HepG2 (cell line): ENCODE measurements at regions of chr2 and their contacts with region 1.

Region 1: DNA sequence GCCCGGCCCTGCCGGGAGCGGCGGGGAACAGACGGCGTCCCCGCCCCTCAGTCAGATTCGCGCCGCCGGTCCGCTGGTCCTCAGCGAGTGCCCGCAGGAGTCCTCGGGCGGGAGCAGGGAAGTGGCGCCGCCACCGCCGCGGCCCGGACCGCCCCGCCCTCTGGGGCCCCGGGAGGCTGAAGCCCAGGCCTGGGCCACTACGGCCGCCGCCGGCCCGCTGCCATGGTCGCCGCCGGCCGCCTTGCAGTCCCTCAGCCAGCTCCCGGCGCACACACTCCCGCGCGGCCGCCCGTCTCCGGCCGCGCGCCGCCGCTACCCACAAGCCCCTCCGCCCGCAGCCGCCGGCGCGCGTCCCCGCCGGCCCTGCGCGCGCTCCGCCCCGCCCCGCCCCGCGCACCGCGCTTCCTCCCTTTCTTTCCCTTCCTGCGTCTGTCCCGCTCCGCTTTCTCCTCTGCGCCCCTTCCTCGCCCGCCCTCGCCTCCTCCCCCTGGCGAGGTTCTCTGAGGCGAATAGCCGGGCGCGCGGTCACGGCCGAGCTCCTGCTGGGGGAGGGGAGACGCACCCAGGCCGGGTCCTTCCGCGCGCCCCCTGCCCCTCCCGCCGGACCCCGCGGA is at the start of gene ROCK2:
- DNase-seq: peak; percentile 88
- ATAC-seq: peak; percentile 52
- H3K4me3 ChIP-seq: peak within 1 kb of the TSS; percentile 72 to 96 (median 86)
- H3K27ac ChIP-seq: peak within 1 kb of the TSS; percentile 98
- H3K4me1 ChIP-seq: peaks cover 52% of the 10 kb centered on the region
- H3K27me3 ChIP-seq: no peaks in the 10 kb centered on the region; a peak in 1 of 5 replicates
- CTCF ChIP-seq: peak; percentile 19; the same call in 1 of the 2 replicates
- EP300 ChIP-seq: peak in 1 of 2 experiments; percentile 52; a peak in 2 of 4 replicates
- POLR2A ChIP-seq: peak; percentile 17 to 80; a peak in 3 of 4 replicates
- RAD21 ChIP-seq: no peak
- total RNA-seq, gene ROCK2: 119 and 174 TPM in 2 replicates

Region 2: GRCh38 chr2:11129598-11130449 is 214.6 kb before region 1 on chr2:
- CTCF ChIA-PET with region 1: no interaction called
- POLR2A ChIA-PET with region 1: interaction called, 19 read pairs
- in situ Hi-C with region 1: no loop called
- intact Hi-C with region 1: loop called (anchors 10 kb)
- DNase-seq: peak; percentile 62
- ATAC-seq: peak; percentile 68
- H3K4me3 ChIP-seq: peak overlapping the region; percentile 46 to 64 (median 47)
- H3K27ac ChIP-seq: no peak overlapping the region
- H3K4me1 ChIP-seq: peaks cover 58% of the 10 kb centered on the region
- H3K27me3 ChIP-seq: peaks cover 3 to 32% of the 10 kb centered on the region in 2 experiments; a peak in 4 of 5 replicates
- CTCF ChIP-seq: peak; percentile 93
- EP300 ChIP-seq: no peak
- POLR2A ChIP-seq: no peak
- RAD21 ChIP-seq: peak; percentile 76

Region 3: GRCh38 chr2:11305958-11306357 is 38.5 kb before region 1 on chr2:
- CTCF ChIA-PET with region 1: no interaction called
- POLR2A ChIA-PET with region 1: interaction called, 10 read pairs
- in situ Hi-C with region 1: no loop called
- intact Hi-C with region 1: no loop called
- DNase-seq: no peak
- ATAC-seq: peak; percentile 43
- H3K4me3 ChIP-seq: no peak overlapping the region
- H3K27ac ChIP-seq: no peak overlapping the region
- H3K4me1 ChIP-seq: peaks cover 70% of the 10 kb centered on the region
- H3K27me3 ChIP-seq: no peaks in the 10 kb centered on the region
- CTCF ChIP-seq: no peak
- EP300 ChIP-seq: no peak
- POLR2A ChIP-seq: no peak
- RAD21 ChIP-seq: no peak

Region 4: DNA sequence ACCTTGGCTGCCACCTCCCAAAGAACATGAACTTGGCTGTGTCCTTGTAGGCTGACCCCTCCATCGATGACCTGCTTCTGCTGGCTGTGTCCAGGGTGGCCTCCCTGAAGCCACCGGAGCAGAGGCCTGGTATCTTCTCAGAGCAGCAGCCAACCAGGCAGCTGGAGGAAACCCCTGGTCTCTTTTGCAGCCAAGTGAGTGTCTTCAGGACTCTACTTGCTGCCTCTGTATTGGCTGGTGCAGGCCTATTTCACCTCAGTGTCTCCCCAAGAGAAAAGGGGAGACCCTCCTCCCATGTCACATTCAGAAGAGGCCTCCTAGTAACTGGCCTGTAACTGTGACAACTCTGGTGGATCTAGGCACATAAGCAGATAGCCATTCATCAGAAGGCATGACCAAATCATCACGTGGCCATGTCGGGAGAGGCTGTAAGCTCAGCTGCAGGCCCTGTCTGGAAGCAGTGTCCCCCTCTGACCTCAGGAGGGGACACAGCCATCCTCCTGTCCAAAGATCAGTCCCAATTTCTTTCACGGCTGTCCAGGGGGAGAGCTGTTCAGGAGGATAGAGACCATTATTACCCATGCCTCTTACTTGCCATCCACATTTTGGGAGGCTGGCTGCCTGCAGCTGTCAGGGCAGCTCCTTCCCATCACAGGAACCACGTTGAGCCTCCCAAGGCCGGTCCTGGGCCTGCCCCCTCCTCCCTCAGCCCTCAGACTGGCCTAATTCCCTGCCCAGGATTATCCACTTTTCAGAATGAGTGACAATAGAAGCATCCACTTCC is 20.8 kb after region 1 on chr2:
- CTCF ChIA-PET with region 1: no interaction called
- POLR2A ChIA-PET with region 1: interaction called, 465 read pairs
- in situ Hi-C with region 1: loop called (anchors 5 kb)
- intact Hi-C with region 1: loop called (anchors 1 kb)
- DNase-seq: peak; percentile 93
- ATAC-seq: peak; percentile 80
- H3K4me3 ChIP-seq: peak overlapping the region; percentile 57 to 70 (median 63)
- H3K27ac ChIP-seq: peak overlapping the region; percentile 86
- H3K4me1 ChIP-seq: peaks cover 86% of the 10 kb centered on the region
- H3K27me3 ChIP-seq: no peaks in the 10 kb centered on the region; a peak in 1 of 5 replicates
- CTCF ChIP-seq: no peak
- EP300 ChIP-seq: peak; percentile 25 to 40; a peak in 2 of 4 replicates
- POLR2A ChIP-seq: peak; percentile 84 to 95
- RAD21 ChIP-seq: peak; percentile 57

Region 5: GRCh38 chr2:11396467-11397445 is 52.3 kb after region 1 on chr2:
- CTCF ChIA-PET with region 1: no interaction called
- POLR2A ChIA-PET with region 1: interaction called, 72 read pairs
- in situ Hi-C with region 1: no loop called
- intact Hi-C with region 1: no loop called
- DNase-seq: no peak
- ATAC-seq: peak; percentile 14
- H3K4me3 ChIP-seq: no peak overlapping the region
- H3K27ac ChIP-seq: no peak overlapping the region
- H3K4me1 ChIP-seq: peaks cover 44% of the 10 kb centered on the region
- H3K27me3 ChIP-seq: peaks cover 3 to 4% of the 10 kb centered on the region in 2 experiments; a peak in 2 of 5 replicates
- CTCF ChIP-seq: no peak
- EP300 ChIP-seq: no peak
- POLR2A ChIP-seq: no peak
- RAD21 ChIP-seq: no peak

Region 6: GRCh38 chr2:11419781-11420180 is 75.3 kb after region 1 on chr2:
- CTCF ChIA-PET with region 1: no interaction called
- POLR2A ChIA-PET with region 1: interaction called, 20 read pairs
- in situ Hi-C with region 1: loop called (anchors 5 kb)
- intact Hi-C with region 1: no loop called
- DNase-seq: no peak
- ATAC-seq: no peak
- H3K4me3 ChIP-seq: no peak overlapping the region
- H3K27ac ChIP-seq: no peak overlapping the region
- H3K4me1 ChIP-seq: peaks cover 38% of the 10 kb centered on the region
- H3K27me3 ChIP-seq: no peaks in the 10 kb centered on the region
- CTCF ChIP-seq: no peak
- EP300 ChIP-seq: no peak
- POLR2A ChIP-seq: no peak
- RAD21 ChIP-seq: no peak

Region 7: GRCh38 chr2:11621410-11621809 is 277.0 kb after region 1 on chr2:
- CTCF ChIA-PET with region 1: no interaction called
- POLR2A ChIA-PET with region 1: no interaction called
- in situ Hi-C with region 1: no loop called
- intact Hi-C with region 1: no loop called
- DNase-seq: no peak
- ATAC-seq: no peak
- H3K4me3 ChIP-seq: no peak overlapping the region
- H3K27ac ChIP-seq: no peak overlapping the region
- H3K4me1 ChIP-seq: no peaks in the 10 kb centered on the region
- H3K27me3 ChIP-seq: no peaks in the 10 kb centered on the region
- CTCF ChIP-seq: no peak
- EP300 ChIP-seq: no peak
- POLR2A ChIP-seq: 0 out of 4 replicates have a peak, but pooled peaks of 1 of the 2 experiments have one; percentile 9
- RAD21 ChIP-seq: no peak